ENCODE measurements at regions of chr1 and their contacts with region 1.

Region 1: DNA sequence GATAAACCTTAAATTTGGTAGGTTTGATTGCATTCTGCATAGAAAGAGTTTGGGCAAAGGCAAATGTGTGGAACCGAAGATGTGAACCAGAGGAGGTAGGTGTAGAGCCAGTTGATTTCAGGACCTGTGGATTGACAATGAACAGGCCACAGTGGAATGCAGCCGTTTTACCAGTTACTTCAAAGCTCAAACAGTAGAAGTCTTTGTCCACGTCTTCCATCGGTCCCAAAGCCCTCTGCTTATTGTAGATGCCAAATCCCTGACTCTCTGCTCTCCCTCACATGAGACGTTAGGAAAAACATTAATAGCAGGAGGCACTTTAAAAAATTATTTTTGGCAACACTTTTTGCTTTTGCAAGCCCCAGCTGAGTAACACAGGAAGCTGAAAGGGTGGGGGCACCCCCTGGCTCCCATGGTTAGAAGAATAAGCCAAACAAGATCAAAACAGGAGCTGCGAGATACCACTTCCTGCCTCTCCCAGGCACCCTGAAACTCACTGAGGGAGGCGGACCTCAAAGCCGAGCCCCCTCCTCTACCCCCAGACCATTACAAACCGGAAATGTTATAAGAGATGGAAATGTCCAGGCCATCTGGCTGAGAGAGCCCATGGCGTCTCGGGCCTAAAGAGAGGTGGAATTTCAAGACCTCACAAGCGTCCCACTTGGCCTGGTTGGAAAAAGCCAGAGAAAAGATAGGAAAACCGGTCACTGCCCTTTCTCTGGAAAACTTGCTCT is 13.5 kb downstream of the TRAF3IP3 start:
- DNase-seq: peak; percentile 90
- H3K4me3 Mint-ChIP-seq: no peak overlapping the region
- H3K27ac Mint-ChIP-seq: no peak overlapping the region
- H3K4me1 Mint-ChIP-seq: peaks cover 5% of the 10 kb centered on the region
- H3K27me3 Mint-ChIP-seq: no peaks in the 10 kb centered on the region

Region 2: GRCh38 chr1:209651148-209651547 is 118.2 kb before region 1 on chr1:
- CTCF ChIA-PET with region 1: no interaction called
- POLR2A ChIA-PET with region 1: interaction called, 5 read pairs
- intact Hi-C with region 1: loop called (anchors 1 kb)
- DNase-seq: peak; percentile 90
- H3K4me3 Mint-ChIP-seq: no peak overlapping the region
- H3K27ac Mint-ChIP-seq: peak overlapping the region; percentile 59
- H3K4me1 Mint-ChIP-seq: peaks cover 57% of the 10 kb centered on the region
- H3K27me3 Mint-ChIP-seq: no peaks in the 10 kb centered on the region

Region 3: GRCh38 chr1:209710093-209710492 is 59.2 kb before region 1 on chr1:
- CTCF ChIA-PET with region 1: interaction called, 3 read pairs
- POLR2A ChIA-PET with region 1: interaction called, 9 read pairs
- intact Hi-C with region 1: loop called (anchors 1 kb)
- DNase-seq: peak; percentile 62
- H3K4me3 Mint-ChIP-seq: peak overlapping the region; percentile 60
- H3K27ac Mint-ChIP-seq: peak overlapping the region; percentile 91
- H3K4me1 Mint-ChIP-seq: peaks cover 76% of the 10 kb centered on the region
- H3K27me3 Mint-ChIP-seq: no peaks in the 10 kb centered on the region

Region 4: GRCh38 chr1:209755926-209756614 is 13.3 kb before region 1 on chr1 and contains the start of gene TRAF3IP3:
- CTCF ChIA-PET with region 1: interaction called, 98 read pairs
- POLR2A ChIA-PET with region 1: interaction called, 184 read pairs
- intact Hi-C with region 1: loop called (anchors 1 kb)
- DNase-seq: peak; percentile 90
- H3K4me3 Mint-ChIP-seq: peak within 1 kb of the TSS; percentile 94
- H3K27ac Mint-ChIP-seq: peak within 1 kb of the TSS; percentile 99
- H3K4me1 Mint-ChIP-seq: peaks cover 77% of the 10 kb centered on the region
- H3K27me3 Mint-ChIP-seq: no peaks in the 10 kb centered on the region
- total RNA-seq, gene TRAF3IP3: 212 to 217 TPM

Region 5: DNA sequence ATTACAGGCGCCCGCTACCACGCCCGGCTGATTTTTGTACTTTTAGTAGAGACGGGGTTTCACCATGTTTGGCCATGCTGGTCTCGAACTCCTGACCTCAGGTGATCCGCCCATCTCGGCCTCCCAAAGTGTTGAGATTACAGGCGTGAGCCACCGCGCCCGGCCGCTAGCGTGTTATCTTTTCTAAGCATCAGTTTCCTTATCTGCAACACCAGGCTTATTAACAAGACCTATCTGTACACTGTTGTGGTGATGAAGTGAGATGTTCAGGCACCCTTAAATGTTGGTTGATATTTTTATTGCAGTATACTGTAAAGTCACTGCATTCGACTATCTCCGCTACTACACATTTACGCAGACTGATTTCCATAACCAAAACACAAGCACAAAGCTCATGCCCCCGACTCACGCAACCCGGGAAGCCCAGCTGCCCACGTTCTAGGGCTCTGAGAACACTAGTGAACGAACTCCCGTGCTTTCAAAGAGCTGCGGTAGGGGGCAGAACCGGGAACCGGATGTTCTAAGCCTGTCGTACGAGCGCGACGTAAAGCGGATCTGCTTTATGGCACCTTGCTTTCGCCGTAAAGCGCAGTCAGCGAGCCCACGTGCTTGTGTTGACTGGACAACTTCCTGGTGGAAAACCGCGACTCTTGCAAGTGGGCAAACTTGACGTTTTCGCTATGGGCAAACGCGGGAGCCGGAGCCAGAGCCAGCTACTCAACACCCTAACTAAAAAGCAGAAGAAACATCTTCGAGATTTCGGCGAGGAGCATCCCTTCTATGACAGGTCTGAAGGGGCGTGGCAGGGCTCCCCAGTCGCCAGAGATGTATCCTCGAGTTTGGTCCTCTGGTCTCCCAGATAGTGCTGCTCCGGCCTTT is 58.3 kb after region 1 on chr1 and contains the start of gene UTP25:
- CTCF ChIA-PET with region 1: interaction called, 32 read pairs
- POLR2A ChIA-PET with region 1: interaction called, 5 read pairs
- intact Hi-C with region 1: loop called (anchors 1 kb)
- DNase-seq: peak; percentile 97
- H3K4me3 Mint-ChIP-seq: peak within 1 kb of the TSS; percentile 93
- H3K27ac Mint-ChIP-seq: peak within 1 kb of the TSS; percentile 88
- H3K4me1 Mint-ChIP-seq: peaks cover 42% of the 10 kb centered on the region
- H3K27me3 Mint-ChIP-seq: peaks cover 4% of the 10 kb centered on the region
- total RNA-seq, gene UTP25: 6.6 to 7.1 TPM